Dendritic cell treated with granulocyte-macrophage colony-stimulating factor and Interleukin-4, amounts not matched to agents 40 ng/mL and 50 ng/mL, for 4 days (primary cell): ENCODE measurements at regions of chr3 and their contacts with region 1.

Region 1: GRCh38 chr3:114079761-114080160 is 23.2 kb downstream of the QTRT2 start:
- H3K4me3 Mint-ChIP-seq: no peak overlapping the region
- H3K27ac Mint-ChIP-seq: no peak overlapping the region
- H3K4me1 Mint-ChIP-seq: no peaks in the 10 kb centered on the region
- H3K27me3 Mint-ChIP-seq: no peaks in the 10 kb centered on the region

Region 2: DNA sequence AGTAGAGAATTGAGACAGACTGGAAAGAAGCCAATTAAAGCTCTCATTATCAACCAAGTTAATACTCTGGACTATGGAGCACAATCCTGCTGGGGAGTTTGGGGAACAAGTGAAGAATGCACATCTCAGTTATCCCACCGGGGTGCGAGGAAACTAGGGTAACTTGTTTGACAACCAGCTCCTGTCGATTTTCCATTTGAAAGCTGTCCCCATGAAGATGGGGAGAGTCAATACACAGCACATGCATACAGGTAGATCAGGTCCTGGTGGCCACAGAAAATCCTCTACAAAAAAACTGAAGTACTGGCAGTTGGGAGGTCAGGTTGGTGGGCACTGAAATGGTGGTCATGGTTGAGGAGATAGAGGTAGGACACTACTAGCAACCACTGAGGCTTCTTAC is 266.9 kb before region 1 on chr3:
- intact Hi-C with region 1: loop called (anchors 10 kb)
- H3K4me3 Mint-ChIP-seq: no peak overlapping the region
- H3K27ac Mint-ChIP-seq: no peak overlapping the region
- H3K4me1 Mint-ChIP-seq: peaks cover 7% of the 10 kb centered on the region
- H3K27me3 Mint-ChIP-seq: no peaks in the 10 kb centered on the region

Region 3: DNA sequence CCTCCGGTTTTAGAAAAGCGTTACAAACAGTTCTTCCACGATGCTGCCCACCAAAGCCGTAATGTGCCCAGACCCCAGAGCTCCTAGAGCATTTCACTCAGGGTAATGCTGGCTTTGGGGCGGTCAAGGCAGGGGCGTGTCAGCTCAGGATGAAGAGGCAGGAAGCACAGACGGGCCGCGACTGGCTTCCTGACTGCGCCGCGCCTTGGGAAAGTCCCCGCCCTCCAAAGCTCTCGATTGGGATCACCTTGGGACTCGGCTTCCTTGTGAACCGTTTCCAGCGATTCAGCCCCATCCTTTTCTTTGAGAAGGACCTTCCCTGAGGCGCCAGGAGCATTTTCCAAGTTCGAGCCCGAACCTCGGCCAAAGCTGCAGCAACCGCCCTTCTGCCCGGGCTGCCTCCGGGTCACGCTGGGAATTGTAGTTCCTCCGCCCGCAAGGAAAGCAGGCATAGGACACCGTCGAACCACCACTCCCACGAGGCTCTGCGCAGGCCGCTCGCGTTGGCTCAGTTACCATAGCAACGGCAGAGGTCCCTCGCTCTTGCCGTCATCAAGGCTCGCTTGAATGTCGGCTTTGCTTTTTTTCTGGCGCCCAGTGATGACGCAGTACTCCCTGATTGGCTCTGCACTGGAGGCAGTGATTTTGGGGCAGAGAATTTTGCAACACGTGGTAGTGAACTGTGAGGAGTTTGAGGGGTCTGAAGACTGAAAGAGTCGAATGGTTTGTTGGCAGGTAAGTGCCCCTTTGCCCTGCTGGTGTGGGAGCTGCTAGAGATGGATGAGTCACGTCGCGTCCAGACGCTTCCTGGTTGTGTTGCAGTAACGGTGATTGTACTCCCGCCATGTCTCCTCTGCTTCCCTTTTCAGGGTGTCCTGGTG is 23.4 kb before region 1 on chr3 and contains the starts of genes CCDC191 and QTRT2:
- intact Hi-C with region 1: no loop called
- H3K4me3 Mint-ChIP-seq: peak within 1 kb of the TSS; percentile 92
- H3K27ac Mint-ChIP-seq: peak within 1 kb of the TSS; percentile 97
- H3K4me1 Mint-ChIP-seq: peaks cover 41% of the 10 kb centered on the region
- H3K27me3 Mint-ChIP-seq: no peaks in the 10 kb centered on the region

Region 4: DNA sequence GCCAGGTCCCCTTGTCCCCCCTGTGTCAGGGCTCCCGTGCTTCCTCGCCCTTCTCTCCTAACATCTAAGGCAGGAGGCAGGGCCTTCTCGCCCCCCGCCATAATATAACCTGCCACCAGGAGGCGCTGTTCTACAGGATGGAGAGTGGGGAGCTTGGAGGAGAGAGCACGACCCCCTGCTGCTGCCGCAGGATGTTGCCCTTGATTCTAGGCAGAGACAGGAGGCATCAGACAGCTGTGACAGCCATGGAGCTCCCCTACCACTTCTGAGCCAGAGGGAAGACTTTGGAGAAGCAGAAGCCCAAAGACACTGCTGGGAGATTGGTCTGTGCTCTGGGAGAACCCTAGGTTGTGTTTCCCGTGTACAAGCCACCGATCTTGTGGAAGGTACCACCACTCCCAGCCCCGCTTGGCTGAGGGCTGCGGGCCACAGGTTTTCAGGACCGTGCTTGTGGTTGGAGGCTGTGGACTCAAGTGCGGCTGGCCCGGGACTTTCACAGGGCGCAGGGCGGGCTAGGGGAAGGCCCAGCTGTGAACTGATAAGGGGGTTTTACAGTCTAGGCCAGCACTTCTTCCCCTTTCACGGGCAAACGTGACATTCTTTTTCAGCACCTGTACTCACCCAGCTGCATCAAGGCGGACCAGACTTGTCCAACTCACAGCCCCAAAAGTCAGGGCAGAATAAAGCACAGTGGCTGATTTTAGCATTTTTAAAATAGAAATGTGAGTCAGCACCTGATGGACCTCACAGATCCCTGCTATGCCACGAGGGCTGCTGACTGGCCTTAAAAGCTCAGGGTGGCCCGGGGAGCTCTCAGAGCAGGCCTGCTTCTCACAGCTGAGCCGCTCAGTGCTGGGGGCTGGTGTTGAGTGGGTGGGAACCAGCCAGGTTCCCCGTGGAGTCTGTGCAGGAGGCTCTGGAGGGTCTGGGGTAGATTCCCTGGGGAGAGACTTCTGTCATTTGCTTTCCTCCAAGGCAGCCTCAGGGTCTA is 211.4 kb after region 1 on chr3:
- intact Hi-C with region 1: no loop called
- H3K4me3 Mint-ChIP-seq: no peak overlapping the region
- H3K27ac Mint-ChIP-seq: no peak overlapping the region
- H3K4me1 Mint-ChIP-seq: peaks cover 6% of the 10 kb centered on the region
- H3K27me3 Mint-ChIP-seq: no peaks in the 10 kb centered on the region